Testis (tissue), 5 donors: ENCODE measurements at regions of chr4 and their contacts with region 1.

Region 1: DNA sequence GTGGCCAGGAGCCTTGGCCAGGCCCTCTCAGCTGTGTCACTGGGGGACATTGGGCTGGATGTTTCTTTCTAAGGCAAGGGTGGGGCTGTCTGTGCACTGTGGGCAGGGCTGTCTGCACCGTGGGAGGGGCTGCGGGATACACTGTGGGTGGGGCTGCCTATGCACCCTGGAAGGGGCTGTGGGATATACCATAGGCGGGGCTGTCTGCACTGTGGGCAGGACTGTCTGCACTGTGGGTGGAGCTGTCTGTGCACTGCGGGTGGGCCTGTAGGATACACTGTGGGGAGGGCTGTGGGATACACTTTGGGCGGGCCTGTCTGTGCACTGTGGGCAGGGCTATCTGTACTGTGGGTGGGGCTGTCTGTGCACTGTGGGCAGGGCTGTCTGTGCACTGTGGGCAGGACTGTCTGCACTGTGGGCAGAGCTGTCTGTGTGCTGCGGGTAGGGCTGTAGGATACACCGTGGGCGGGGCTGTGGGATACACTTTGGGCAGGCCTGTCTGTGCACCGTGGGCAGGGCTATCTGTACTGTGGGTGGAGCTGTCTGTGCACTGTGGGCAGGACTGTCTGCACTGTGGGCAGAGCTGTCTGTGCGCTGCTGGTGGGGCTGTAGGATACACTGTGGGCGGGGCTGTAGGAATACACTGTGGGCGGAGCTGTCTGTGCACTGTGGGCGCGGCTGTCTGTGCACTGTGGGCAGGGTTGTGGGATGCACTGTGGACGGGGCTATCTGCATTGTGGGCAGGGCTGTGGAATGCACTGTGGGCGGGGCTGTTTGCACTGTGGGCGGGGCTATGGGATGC is 31.1 kb downstream of the ACOX3 start:
- DNase-seq: peak; percentile 73
- H3K4me3 ChIP-seq: no peak overlapping the region
- H3K27ac ChIP-seq: no peak overlapping the region
- H3K4me1 ChIP-seq: no peaks in the 10 kb centered on the region
- H3K27me3 ChIP-seq: no peaks in the 10 kb centered on the region
- CTCF ChIP-seq: no peak
- POLR2A ChIP-seq: no peak

Region 2: DNA sequence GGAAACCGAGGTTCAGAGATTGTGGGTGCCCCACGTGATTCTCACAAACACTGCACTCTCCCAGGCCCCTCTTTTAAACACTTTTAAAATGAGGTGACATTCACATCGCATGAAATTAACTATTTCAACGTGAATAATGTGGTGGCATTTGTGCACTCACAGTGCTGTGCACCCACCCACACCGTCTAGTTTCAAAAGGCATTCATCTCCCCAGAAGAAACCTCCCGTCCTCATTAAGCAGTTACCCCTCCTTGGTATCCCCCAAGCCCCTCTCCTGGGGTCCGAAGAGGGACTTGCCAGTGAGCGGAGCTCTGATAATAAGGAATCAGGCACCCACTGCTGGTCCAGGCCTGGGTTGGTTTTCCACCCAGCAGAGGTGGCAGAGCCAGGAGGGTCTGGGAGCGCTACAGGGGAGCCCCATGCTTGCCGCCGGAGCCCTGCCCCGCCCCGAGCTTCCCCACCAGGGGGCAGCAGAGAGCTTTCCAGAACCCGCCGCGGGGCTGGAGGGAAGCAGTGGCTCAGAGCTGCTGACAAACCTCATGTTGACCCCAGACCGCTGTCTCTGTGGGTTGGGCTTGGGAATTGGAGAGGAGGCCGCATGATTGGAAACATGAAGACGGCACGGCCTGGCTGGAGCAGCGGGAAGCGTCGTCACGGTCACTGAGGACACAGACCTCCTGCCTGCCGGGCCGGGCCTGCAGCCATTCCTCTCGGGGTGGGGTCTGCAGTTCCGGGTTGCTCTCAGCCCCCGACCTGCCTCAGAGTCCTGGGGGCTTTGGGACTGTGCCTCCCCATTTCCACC is 167.4 kb before region 1 on chr4:
- intact Hi-C with region 1: loop called (anchors 5 kb)
- DNase-seq: peak; percentile 90
- H3K4me3 ChIP-seq: no peak overlapping the region
- H3K27ac ChIP-seq: no peak overlapping the region
- H3K4me1 ChIP-seq: peaks cover 7% of the 10 kb centered on the region
- H3K27me3 ChIP-seq: no peaks in the 10 kb centered on the region
- CTCF ChIP-seq: peak; percentile 94 to 98 (median 95)
- POLR2A ChIP-seq: no peak

Region 3: DNA sequence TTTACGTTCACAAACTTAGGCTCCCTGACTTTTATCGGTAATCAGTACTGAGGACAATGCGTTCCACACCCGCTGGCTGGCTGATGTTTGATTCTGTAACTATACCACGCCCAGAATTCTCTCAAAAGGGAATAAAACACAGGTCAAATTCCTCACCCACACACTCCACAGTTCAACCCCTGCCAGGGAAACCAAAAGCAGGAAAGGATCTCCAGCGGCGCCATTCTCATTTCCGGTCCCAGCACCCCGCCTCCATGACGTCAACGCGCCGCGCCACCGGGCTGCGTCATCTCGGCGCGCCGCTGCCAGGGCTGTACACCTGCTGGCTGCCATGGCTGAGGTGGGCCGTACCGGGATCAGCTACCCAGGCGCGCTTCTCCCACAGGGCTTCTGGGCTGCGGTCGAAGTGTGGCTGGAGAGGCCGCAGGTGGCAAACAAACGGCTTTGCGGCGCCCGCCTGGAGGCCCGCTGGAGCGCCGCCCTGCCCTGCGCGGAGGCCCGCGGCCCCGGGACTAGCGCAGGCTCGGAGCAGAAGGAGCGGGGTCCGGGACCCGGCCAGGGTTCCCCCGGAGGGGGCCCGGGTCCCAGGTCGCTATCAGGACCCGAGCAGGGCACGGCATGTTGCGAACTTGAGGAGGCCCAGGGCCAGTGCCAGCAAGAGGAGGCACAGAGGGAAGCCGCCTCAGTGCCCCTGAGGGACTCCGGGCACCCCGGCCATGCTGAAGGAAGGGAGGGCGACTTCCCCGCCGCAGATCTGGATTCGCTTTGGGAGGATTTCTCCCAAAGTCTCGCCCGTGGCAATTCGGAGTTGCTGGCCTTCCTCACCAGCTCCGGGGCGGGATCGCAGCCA is 31.3 kb after region 1 on chr4 and contains the starts of genes ACOX3 and TRMT44:
- intact Hi-C with region 1: no loop called
- DNase-seq: peak; percentile 96
- H3K4me3 ChIP-seq: peak within 1 kb of the TSS; percentile 94 to 96
- H3K27ac ChIP-seq: peak within 1 kb of the TSS; percentile 85 to 87
- H3K4me1 ChIP-seq: peaks cover 60% of the 10 kb centered on the region
- H3K27me3 ChIP-seq: no peaks in the 10 kb centered on the region
- CTCF ChIP-seq: peak in 2 of 3 experiments; percentile 13 to 38
- POLR2A ChIP-seq: no peak
- total RNA-seq, gene ACOX3: 29.8 to 35.9 TPM
- total RNA-seq, gene TRMT44: 41.3 to 52.7 TPM

Region 4: DNA sequence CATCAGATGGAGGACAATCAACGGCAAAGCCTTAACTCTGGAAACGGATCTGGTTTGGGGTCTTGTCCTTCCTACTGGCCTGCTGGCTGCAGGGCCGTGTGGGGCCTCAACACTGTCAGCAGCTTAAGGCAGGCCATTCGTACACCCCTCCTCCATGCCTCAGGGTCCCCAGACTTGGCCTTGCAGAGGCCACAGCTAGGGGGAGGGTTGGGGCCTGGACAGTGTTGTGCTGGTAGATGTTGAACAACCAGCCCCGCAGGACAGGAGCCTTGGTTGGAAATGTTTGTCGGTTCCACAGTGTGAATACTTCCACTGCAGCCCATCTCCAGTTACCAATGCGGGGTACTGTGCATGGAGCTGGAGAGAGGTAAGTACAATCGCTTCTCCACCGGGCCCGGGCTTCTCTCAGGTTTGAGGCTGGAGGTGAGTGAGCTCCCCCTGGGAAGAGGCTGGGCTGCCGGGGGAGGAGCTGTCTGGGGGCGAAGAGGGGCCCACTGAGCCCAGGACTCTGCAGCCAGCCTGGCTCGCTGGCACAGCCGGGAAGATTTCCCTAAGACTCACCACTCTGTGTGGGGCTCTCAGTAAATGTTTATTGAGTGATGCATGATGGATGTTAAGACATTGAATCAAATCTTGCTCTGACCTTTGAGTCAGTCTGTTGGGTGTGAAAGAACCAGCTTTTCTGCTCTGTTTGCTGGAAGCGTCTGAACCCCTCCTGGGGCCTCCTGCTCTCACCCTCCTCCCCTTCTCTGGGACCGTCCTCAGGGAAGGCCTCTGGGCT is 151.0 kb after region 1 on chr4:
- intact Hi-C with region 1: no loop called
- DNase-seq: no peak
- H3K4me3 ChIP-seq: no peak overlapping the region
- H3K27ac ChIP-seq: no peak overlapping the region
- H3K4me1 ChIP-seq: no peaks in the 10 kb centered on the region
- H3K27me3 ChIP-seq: no peaks in the 10 kb centered on the region
- CTCF ChIP-seq: no peak
- POLR2A ChIP-seq: no peak